Activated CD4-positive, alpha-beta T cell treated with anti-CD3 and anti-CD28 coated beads, Interleukin-2, amount 10 ng/mL, durations not matched to agents 24 days and 14 days (primary cell): ENCODE measurements at regions of chr17 and their contacts with region 1.

Region 1: DNA sequence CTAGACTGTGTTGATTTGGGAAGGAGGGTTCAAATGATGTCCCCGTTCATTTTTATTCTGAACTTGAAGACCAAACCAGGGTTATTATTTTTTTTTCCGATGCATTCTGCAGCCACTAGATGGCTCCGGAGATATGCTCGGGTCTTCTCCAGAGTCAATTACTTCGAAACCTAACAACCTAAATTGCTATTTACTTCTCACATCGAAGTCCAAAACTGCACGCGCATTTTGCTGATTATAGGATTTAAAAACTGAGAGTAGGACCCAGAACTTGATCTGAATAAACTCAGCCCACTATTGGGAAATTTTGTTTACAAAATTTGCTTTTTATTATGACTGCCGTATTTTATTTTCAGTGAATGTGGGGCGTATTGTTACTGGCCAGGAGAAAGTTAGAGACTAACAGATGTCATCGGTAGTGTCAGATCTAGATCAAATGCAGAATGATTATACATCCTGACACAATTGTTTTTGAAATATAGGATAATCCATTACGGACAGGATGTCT is 263.8 kb downstream of the HS3ST3A1 start:
- DNase-seq: peak; percentile 73
- H3K4me3 Mint-ChIP-seq: peak overlapping the region; percentile 50
- H3K27ac Mint-ChIP-seq: no peak overlapping the region
- H3K4me1 Mint-ChIP-seq: peaks cover 4% of the 10 kb centered on the region
- H3K27me3 Mint-ChIP-seq: peaks cover 11% of the 10 kb centered on the region

Region 2: GRCh38 chr17:13513039-13513405 is 175.1 kb after region 1 on chr17:
- intact Hi-C with region 1: no loop called
- DNase-seq: no peak
- H3K4me3 Mint-ChIP-seq: no peak overlapping the region
- H3K27ac Mint-ChIP-seq: no peak overlapping the region
- H3K4me1 Mint-ChIP-seq: peaks cover 14% of the 10 kb centered on the region
- H3K27me3 Mint-ChIP-seq: peaks cover 8% of the 10 kb centered on the region

Region 3: DNA sequence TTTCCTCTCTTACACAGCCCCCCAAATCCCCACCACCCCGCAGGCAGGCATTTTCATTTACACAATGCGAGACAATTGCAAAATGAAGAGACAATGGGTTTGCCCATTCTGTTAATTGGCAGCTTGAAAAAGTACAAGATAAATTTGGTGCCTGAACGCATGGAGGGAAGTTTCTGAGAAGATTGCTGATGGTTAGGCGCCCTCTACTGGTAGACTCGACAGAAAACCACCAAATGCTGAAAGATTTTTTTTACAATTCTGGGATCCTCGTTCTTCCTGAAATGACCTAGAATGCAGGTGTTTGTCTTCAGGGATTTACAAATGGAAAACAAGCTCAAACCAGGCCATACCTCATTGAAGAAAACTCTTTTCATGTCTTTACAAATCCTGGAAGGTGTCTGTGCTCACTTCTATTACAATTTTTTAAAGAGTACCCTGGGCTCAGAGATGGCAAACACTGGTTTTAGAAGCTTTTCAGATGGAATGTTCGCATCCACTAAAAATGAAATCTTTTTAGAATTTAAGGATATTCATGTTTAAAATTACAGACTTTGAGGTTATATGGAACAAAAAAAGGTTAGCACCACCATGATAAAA is 1588.7 kb after region 1 on chr17:
- intact Hi-C with region 1: loop called (anchors 5 kb)
- DNase-seq: peak; percentile 85
- H3K4me3 Mint-ChIP-seq: no peak overlapping the region
- H3K27ac Mint-ChIP-seq: no peak overlapping the region
- H3K4me1 Mint-ChIP-seq: no peaks in the 10 kb centered on the region
- H3K27me3 Mint-ChIP-seq: peaks cover 2% of the 10 kb centered on the region